PC-3 (cell line): ENCODE measurements at regions of chr20 and their contacts with region 1.

Region 1: GRCh38 chr20:45934586-45935415 is at the start of gene PCIF1:
- DNase-seq: peak; percentile 99
- ATAC-seq: peak; percentile 81
- H3K4me3 ChIP-seq: peak within 1 kb of the TSS; percentile 91
- H3K27ac ChIP-seq: peak within 1 kb of the TSS; percentile 91
- H3K4me1 ChIP-seq: peaks cover 12% of the 10 kb centered on the region; the same call in 1 of the 2 replicates
- H3K27me3 ChIP-seq: no peaks in the 10 kb centered on the region
- CTCF ChIP-seq: no peak
- total RNA-seq, gene PCIF1: 18.4 and 20.2 TPM in 2 replicates

Region 2: GRCh38 chr20:44997171-44998067 is 937.4 kb before region 1 on chr20:
- CTCF ChIA-PET with region 1: no interaction called
- POLR2A ChIA-PET with region 1: no interaction called
- intact Hi-C with region 1: no loop called
- DNase-seq: no peak
- ATAC-seq: no peak
- H3K4me3 ChIP-seq: no peak overlapping the region
- H3K27ac ChIP-seq: no peak overlapping the region
- H3K4me1 ChIP-seq: peaks cover 12% of the 10 kb centered on the region
- H3K27me3 ChIP-seq: no peaks in the 10 kb centered on the region
- CTCF ChIP-seq: no peak

Region 3: DNA sequence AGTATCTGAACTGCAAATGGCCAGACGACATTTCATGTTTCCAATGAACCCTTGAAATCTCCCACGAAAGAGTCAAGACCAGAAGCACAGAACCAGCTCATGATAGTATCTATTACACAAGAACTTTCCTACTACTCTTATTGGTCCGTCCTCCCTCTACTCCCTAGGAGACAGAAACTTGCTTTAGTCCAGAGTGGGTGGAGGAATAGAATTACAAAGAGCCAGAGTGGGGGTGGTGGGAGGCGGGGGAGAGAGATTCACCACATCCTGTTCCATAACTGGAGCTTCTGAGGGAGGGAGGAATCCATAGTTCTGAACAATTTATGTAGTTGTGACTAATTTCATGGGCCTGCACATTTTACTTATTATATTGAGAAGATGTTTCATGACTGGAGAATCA is 323.7 kb before region 1 on chr20:
- CTCF ChIA-PET with region 1: no interaction called
- POLR2A ChIA-PET with region 1: interaction called, 24 read pairs
- intact Hi-C with region 1: no loop called
- DNase-seq: peak; percentile 85
- ATAC-seq: peak; percentile 74
- H3K4me3 ChIP-seq: no peak overlapping the region; the same call in 1 of the 2 replicates
- H3K27ac ChIP-seq: peak overlapping the region; percentile 59
- H3K4me1 ChIP-seq: peaks cover 23% of the 10 kb centered on the region
- H3K27me3 ChIP-seq: no peaks in the 10 kb centered on the region
- CTCF ChIP-seq: no peak

Region 4: GRCh38 chr20:45779011-45779915 is 155.5 kb before region 1 on chr20:
- CTCF ChIA-PET with region 1: no interaction called
- POLR2A ChIA-PET with region 1: no interaction called
- intact Hi-C with region 1: loop called (anchors 1 kb)
- DNase-seq: peak; percentile 99
- ATAC-seq: peak; percentile 63
- H3K4me3 ChIP-seq: peak overlapping the region; percentile 11; the same call in 1 of the 2 replicates
- H3K27ac ChIP-seq: peak overlapping the region; percentile 99
- H3K4me1 ChIP-seq: peaks cover 62% of the 10 kb centered on the region
- H3K27me3 ChIP-seq: no peaks in the 10 kb centered on the region
- CTCF ChIP-seq: no peak

Region 5: DNA sequence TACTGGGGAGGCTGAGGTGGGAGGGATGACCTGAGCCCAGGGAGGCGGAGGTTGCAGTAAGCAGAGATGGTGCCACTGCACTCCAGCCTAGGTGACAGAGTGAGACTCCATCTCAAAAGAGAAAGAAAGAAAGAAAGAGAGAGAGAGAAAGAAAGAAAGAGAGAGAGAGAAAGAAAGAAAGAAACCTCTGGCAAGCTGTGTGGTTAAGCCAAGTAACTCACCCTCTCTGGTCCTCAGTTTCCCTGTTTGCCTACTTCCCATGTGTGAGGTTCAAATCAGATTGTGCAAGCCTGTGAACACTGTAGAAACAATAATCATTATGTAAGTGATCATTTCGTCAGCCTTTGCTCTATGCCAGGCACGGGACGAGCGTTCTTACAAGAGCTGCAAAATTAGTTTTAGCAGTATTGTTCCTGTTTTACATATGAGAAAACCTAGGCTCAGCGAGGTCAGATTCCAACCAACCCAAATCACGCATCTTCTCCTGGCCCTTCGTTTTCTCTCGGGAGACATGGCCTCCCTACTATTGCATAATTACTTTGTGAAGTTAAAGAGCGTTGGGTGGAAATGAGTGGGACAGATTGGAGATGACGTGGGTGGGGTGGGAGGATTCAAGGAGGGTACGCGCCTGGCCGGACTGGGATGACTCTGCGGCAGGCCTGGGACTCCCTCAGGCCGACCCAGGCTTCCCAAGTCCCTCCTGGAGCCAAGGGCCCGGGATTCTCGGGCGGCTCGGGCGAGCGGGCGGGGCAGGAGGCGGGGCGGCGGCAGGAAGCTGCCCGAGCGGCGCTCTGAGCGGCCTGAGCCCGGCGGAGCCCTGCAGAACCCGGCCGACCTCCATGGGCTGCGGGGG is 101.5 kb before region 1 on chr20 and contains the start of gene SNX21:
- CTCF ChIA-PET with region 1: no interaction called
- POLR2A ChIA-PET with region 1: interaction called, 17 read pairs
- intact Hi-C with region 1: no loop called
- DNase-seq: peak; percentile 82
- ATAC-seq: peak; percentile 77
- H3K4me3 ChIP-seq: peak within 1 kb of the TSS; percentile 78
- H3K27ac ChIP-seq: peak within 1 kb of the TSS; percentile 66
- H3K4me1 ChIP-seq: peaks cover 35% of the 10 kb centered on the region
- H3K27me3 ChIP-seq: no peaks in the 10 kb centered on the region
- CTCF ChIP-seq: no peak
- total RNA-seq, gene SNX21: 90.1 and 108 TPM in 2 replicates

Region 6: DNA sequence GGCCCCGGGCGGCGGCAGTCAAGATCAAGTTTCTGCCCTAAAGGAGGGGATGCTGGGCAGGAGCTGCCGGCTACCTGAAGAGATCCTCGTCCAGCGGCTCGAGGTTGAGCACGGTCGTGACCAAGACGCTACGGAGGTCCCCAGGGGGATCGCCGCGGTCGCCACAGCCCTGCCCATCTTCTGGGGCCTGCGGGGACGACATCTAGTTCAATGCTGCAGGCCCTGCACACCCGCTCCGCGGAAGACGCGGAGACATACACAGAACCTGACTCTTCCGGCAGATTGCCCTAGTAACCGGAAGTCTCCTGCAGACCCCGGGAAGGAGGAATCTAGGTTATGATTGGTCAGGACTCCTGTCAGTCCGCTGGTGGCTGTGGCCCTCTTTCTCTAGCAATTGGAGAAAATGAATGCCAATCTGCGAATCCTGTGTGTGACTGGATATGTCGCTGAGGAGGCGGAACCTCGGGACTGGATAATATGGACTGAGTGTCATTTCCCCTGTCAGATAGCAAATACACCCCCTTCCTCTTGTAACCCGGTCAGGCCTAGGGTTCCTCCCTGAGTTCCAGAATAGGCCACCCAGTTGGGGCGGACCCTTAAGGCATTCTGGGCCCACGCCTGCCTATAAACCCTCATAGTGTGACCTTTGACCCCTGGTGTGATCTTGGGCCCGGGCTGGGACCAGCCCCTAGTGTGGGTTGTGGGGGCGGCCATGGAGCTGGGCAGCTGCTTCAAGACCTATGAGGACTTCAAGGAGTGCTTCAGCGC is 77.5 kb before region 1 on chr20 and contains the starts of genes ACOT8 and ZSWIM3:
- CTCF ChIA-PET with region 1: interaction called, 13 read pairs
- POLR2A ChIA-PET with region 1: interaction called, 4 read pairs
- intact Hi-C with region 1: no loop called
- DNase-seq: peak; percentile 100
- ATAC-seq: peak; percentile 97
- H3K4me3 ChIP-seq: peak within 1 kb of the TSS; percentile 87
- H3K27ac ChIP-seq: peak within 1 kb of the TSS; percentile 8; the same call in 1 of the 2 replicates
- H3K4me1 ChIP-seq: peaks cover 30% of the 10 kb centered on the region
- H3K27me3 ChIP-seq: no peaks in the 10 kb centered on the region
- CTCF ChIP-seq: no peak
- total RNA-seq, gene ACOT8: 57.4 and 58.8 TPM in 2 replicates
- total RNA-seq, gene ZSWIM3: 2.1 and 4.2 TPM in 2 replicates

Region 7: GRCh38 chr20:45910670-45911485 is 23.9 kb before region 1 on chr20:
- CTCF ChIA-PET with region 1: no interaction called
- POLR2A ChIA-PET with region 1: interaction called, 19 read pairs
- intact Hi-C with region 1: no loop called
- DNase-seq: peak; percentile 99
- ATAC-seq: peak; percentile 76
- H3K4me3 ChIP-seq: peak overlapping the region; percentile 65
- H3K27ac ChIP-seq: peak overlapping the region; percentile 35
- H3K4me1 ChIP-seq: peaks cover 15% of the 10 kb centered on the region
- H3K27me3 ChIP-seq: no peaks in the 10 kb centered on the region
- CTCF ChIP-seq: no peak

Region 8: GRCh38 chr20:46057856-46058598 is 123.2 kb after region 1 on chr20:
- CTCF ChIA-PET with region 1: no interaction called
- POLR2A ChIA-PET with region 1: no interaction called
- intact Hi-C with region 1: no loop called
- DNase-seq: no peak
- ATAC-seq: no peak
- H3K4me3 ChIP-seq: no peak overlapping the region
- H3K27ac ChIP-seq: no peak overlapping the region
- H3K4me1 ChIP-seq: no peaks in the 10 kb centered on the region
- H3K27me3 ChIP-seq: no peaks in the 10 kb centered on the region
- CTCF ChIP-seq: no peak